ENCODE measurements at regions of chr9 and their contacts with region 1.

Region 1: GRCh38 chr9:132150256-132150655 is 11.6 kb upstream of the NTNG2 start:
- DNase-seq: no peak
- H3K4me3 Mint-ChIP-seq: no peak overlapping the region
- H3K27ac Mint-ChIP-seq: no peak overlapping the region
- H3K4me1 Mint-ChIP-seq: peaks cover 1% of the 10 kb centered on the region
- H3K27me3 Mint-ChIP-seq: peaks cover 49% of the 10 kb centered on the region

Region 2: GRCh38 chr9:132121021-132121420 is 29.2 kb before region 1 on chr9:
- CTCF ChIA-PET with region 1: no interaction called
- POLR2A ChIA-PET with region 1: no interaction called
- intact Hi-C with region 1: no loop called
- DNase-seq: no peak
- H3K4me3 Mint-ChIP-seq: no peak overlapping the region
- H3K27ac Mint-ChIP-seq: no peak overlapping the region
- H3K4me1 Mint-ChIP-seq: peaks cover 7% of the 10 kb centered on the region
- H3K27me3 Mint-ChIP-seq: peaks cover 52% of the 10 kb centered on the region

Region 3: GRCh38 chr9:132135456-132135855 is 14.8 kb before region 1 on chr9:
- CTCF ChIA-PET with region 1: no interaction called
- POLR2A ChIA-PET with region 1: no interaction called
- intact Hi-C with region 1: no loop called
- DNase-seq: no peak
- H3K4me3 Mint-ChIP-seq: no peak overlapping the region
- H3K27ac Mint-ChIP-seq: no peak overlapping the region
- H3K4me1 Mint-ChIP-seq: no peaks in the 10 kb centered on the region
- H3K27me3 Mint-ChIP-seq: peaks cover 45% of the 10 kb centered on the region

Region 4: DNA sequence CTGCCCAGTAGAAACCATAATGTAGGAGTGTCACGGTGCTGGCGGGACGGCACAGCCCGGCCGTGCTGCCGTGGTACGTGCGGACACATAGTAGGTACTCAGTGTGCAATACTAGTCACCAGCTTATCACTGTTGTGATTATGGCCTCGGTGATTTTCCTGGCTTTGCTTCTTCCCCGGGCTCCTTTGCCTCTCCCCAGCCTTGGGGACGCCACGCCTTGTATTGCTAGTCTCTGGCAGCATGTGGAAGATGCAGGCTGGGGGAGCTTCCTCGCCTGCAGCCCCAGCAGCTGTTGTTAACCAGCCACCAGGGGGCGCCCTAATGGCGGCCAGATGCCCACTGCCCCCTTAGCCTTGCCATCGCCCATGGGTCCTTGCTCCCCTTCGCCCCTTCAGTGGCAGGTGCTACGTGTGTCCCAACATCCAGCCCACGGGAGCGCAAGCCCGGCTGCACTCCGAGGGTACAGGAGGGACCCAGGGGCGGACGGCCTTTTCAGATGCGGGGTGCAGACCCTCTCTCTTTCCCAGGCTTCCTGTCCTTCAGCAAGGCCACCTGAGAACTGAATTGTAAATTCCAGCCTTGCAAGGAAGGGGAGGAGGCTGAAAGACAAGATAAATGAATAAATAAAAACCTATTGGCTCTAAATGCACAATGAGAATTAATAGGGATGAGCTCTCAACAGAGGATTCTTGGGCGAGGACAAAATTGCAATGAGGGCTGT is 19.6 kb after region 1 on chr9:
- CTCF ChIA-PET with region 1: interaction called, 11 read pairs
- POLR2A ChIA-PET with region 1: no interaction called
- intact Hi-C with region 1: no loop called
- DNase-seq: peak; percentile 64
- H3K4me3 Mint-ChIP-seq: no peak overlapping the region
- H3K27ac Mint-ChIP-seq: no peak overlapping the region
- H3K4me1 Mint-ChIP-seq: no peaks in the 10 kb centered on the region
- H3K27me3 Mint-ChIP-seq: peaks cover 40% of the 10 kb centered on the region

Region 5: GRCh38 chr9:132283165-132283564 is 132.9 kb after region 1 on chr9:
- CTCF ChIA-PET with region 1: no interaction called
- POLR2A ChIA-PET with region 1: no interaction called
- intact Hi-C with region 1: no loop called
- DNase-seq: peak; percentile 45
- H3K4me3 Mint-ChIP-seq: no peak overlapping the region
- H3K27ac Mint-ChIP-seq: peak overlapping the region; percentile 29
- H3K4me1 Mint-ChIP-seq: peaks cover 12% of the 10 kb centered on the region
- H3K27me3 Mint-ChIP-seq: no peaks in the 10 kb centered on the region

Region 6: DNA sequence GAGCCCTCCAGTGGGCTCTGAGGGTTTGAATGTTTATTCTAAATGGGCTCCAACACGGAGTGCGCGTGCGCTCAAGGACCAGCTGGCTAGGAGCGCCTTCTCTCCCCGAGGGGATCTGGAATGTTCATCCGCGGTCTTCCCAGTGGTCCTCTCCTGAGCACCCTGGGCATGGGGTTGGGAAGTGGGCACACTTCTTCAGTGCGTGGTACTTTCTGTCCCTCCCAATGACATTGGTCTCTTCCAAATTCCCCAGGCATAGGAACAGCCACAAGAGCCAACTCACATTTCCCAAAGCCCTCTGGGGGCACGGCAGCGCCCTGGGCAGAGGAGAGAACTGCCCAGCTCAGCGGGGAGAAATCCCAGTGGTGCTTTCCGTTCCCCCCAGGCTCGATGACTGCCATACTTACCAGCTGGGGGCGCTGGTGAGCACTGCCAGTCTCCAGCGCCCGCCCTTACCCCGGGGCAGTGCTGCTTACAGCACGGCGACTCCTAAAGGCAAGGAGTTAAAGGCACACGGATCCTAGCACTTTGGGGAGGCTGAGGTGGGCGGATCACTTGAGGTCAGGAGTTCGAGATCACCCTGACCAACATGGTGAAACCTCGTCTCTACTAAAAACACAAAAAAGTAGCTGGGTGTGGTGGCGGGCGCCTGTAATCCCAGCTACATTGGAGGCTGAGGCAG is 1088.7 kb after region 1 on chr9:
- CTCF ChIA-PET with region 1: no interaction called
- POLR2A ChIA-PET with region 1: no interaction called
- intact Hi-C with region 1: no loop called
- DNase-seq: peak; percentile 80
- H3K4me3 Mint-ChIP-seq: peak overlapping the region; percentile 21
- H3K27ac Mint-ChIP-seq: no peak overlapping the region
- H3K4me1 Mint-ChIP-seq: peaks cover 3% of the 10 kb centered on the region
- H3K27me3 Mint-ChIP-seq: peaks cover 9% of the 10 kb centered on the region